ENCODE measurements at regions of chr6 and their contacts with region 1.

Region 1: GRCh38 chr6:131960371-131961133 is 9.4 kb upstream of the CCN2 start:
- DNase-seq: no peak
- H3K4me3 ChIP-seq: no peak overlapping the region
- H3K4me3 Mint-ChIP-seq: no peak overlapping the region
- H3K27ac Mint-ChIP-seq: no peak overlapping the region
- H3K4me1 ChIP-seq: peaks cover 21% of the 10 kb centered on the region
- H3K4me1 Mint-ChIP-seq: no peaks in the 10 kb centered on the region
- H3K27me3 ChIP-seq: no peaks in the 10 kb centered on the region
- H3K27me3 Mint-ChIP-seq: no peaks in the 10 kb centered on the region
- CTCF ChIP-seq: no peak

Region 2: GRCh38 chr6:132020138-132020581 is 59.6 kb after region 1 on chr6:
- CTCF ChIA-PET with region 1: no interaction called
- POLR2A ChIA-PET with region 1: no interaction called
- intact Hi-C with region 1: loop called (anchors 2 kb)
- DNase-seq: no peak
- H3K4me3 ChIP-seq: no peak overlapping the region
- H3K4me3 Mint-ChIP-seq: no peak overlapping the region
- H3K27ac Mint-ChIP-seq: no peak overlapping the region
- H3K4me1 ChIP-seq: peaks cover 30% of the 10 kb centered on the region
- H3K4me1 Mint-ChIP-seq: peaks cover 21% of the 10 kb centered on the region
- H3K27me3 ChIP-seq: no peaks in the 10 kb centered on the region
- H3K27me3 Mint-ChIP-seq: no peaks in the 10 kb centered on the region
- CTCF ChIP-seq: no peak